IMR-90 (cell line): ENCODE measurements at regions of chr10 and their contacts with region 1.

Region 1: GRCh38 chr10:13740416-13740815 is 153.7 kb downstream of the PRPF18 start:
- DNase-seq: no peak
- ATAC-seq: no peak
- H3K4me3 ChIP-seq: no peak overlapping the region
- H3K27ac ChIP-seq: no peak overlapping the region
- H3K4me1 ChIP-seq: no peaks in the 10 kb centered on the region
- H3K27me3 ChIP-seq: no peaks in the 10 kb centered on the region
- CTCF ChIP-seq: no peak
- POLR2A ChIP-seq: no peak
- RAD21 ChIP-seq: no peak

Region 2: DNA sequence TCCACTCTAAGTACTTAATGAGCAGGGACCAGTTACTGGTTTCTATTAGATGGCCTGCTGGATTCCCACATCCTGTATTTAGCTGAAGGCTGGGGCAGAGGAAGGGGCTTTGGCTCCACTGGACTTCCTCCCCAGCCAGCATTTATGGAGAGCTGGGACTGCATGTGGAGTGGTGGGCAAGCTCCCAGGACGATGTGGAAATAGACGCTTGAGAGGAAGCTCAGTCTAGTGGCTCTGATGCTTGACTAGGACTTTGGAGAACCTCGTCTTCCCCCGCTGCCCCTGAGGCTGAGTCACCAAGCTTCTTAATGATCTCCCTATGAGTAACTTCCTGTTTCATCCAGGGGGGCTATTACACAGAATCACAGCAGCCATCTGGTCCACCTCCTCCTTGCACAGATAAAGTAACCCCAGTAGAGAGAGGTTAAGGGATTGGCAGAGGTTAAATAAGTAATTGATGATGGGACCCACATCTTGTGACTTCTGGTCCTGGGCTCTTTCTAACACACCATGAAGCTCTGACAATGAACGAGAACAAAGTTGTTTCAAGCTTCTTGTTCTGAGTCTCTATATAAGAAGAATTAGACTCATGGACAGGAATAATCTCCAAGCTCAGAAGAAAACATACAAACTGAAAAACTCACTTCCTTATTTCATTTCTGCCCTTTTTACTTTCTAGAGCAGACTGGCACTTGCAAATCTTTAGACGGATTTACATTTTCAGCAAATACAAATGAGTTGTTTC is 27.4 kb before region 1 on chr10:
- CTCF ChIA-PET with region 1: interaction called, 3 read pairs
- POLR2A ChIA-PET with region 1: interaction called, 10 read pairs
- dilution Hi-C with region 1: no loop called
- in situ Hi-C with region 1: no loop called
- intact Hi-C with region 1: no loop called
- DNase-seq: peak; percentile 99
- ATAC-seq: peak; percentile 77
- H3K4me3 ChIP-seq: no peak overlapping the region
- H3K27ac ChIP-seq: peak overlapping the region; percentile 76
- H3K4me1 ChIP-seq: peaks cover 35% of the 10 kb centered on the region
- H3K27me3 ChIP-seq: no peaks in the 10 kb centered on the region
- CTCF ChIP-seq: no peak
- POLR2A ChIP-seq: no peak; the same call in 1 of the 2 replicates
- RAD21 ChIP-seq: 0 out of 2 replicates have a peak, but pooled peaks have one; percentile 5